ENCODE measurements at regions of chr20 and their contacts with region 1.

Region 1: DNA sequence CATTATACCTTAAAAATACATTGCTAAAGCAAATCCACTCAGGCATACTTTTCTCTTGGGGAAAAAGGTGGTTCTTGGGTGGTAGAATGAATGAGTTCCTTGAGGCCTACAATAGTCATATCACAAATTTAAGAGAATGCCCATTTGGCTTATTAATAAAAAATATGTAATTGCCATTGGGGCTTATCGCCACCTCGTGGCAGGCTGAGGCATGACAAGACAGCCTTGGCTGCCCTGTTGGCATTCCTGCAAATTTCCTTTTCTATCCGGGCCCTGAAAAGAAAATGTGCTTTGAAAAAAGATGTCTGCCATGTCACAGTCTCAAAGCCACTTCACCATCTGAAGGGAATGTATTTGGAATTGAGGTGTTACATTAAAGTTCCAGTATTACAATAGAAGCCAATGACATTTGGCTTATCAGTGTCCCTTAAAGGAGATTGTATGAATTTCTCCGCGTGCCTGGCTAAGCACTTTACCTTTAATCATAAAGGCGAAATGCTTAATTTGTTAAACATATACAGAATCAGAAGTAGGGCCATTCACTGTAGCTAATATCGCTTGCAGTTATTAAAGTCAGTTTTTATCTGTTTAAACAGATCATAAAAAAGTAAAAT is 188.3 kb upstream of the ZFP64 start:
- DNase-seq: peak; percentile 43
- H3K4me3 ChIP-seq: no peak overlapping the region
- H3K27ac ChIP-seq: no peak overlapping the region
- H3K4me1 ChIP-seq: no peaks in the 10 kb centered on the region
- H3K27me3 ChIP-seq: no peaks in the 10 kb centered on the region
- CTCF ChIP-seq: peak; percentile 91

Region 2: GRCh38 chr20:52242237-52243230 is 137.3 kb before region 1 on chr20:
- intact Hi-C with region 1: loop called (anchors 5 kb)
- DNase-seq: no peak
- H3K4me3 ChIP-seq: no peak overlapping the region
- H3K27ac ChIP-seq: no peak overlapping the region
- H3K4me1 ChIP-seq: no peaks in the 10 kb centered on the region
- H3K27me3 ChIP-seq: no peaks in the 10 kb centered on the region
- CTCF ChIP-seq: peak; percentile 61

Region 3: GRCh38 chr20:52256454-52256853 is 123.4 kb before region 1 on chr20:
- intact Hi-C with region 1: no loop called
- DNase-seq: no peak
- H3K4me3 ChIP-seq: no peak overlapping the region
- H3K27ac ChIP-seq: no peak overlapping the region
- H3K4me1 ChIP-seq: no peaks in the 10 kb centered on the region
- H3K27me3 ChIP-seq: no peaks in the 10 kb centered on the region
- CTCF ChIP-seq: no peak

Region 4: GRCh38 chr20:52279706-52280105 is 100.1 kb before region 1 on chr20:
- intact Hi-C with region 1: no loop called
- DNase-seq: no peak
- H3K4me3 ChIP-seq: no peak overlapping the region
- H3K27ac ChIP-seq: no peak overlapping the region
- H3K4me1 ChIP-seq: no peaks in the 10 kb centered on the region
- H3K27me3 ChIP-seq: no peaks in the 10 kb centered on the region
- CTCF ChIP-seq: no peak